CD4-positive, alpha-beta memory T cell (primary cell): ENCODE measurements at regions of chr6 and their contacts with region 1.

Region 1: DNA sequence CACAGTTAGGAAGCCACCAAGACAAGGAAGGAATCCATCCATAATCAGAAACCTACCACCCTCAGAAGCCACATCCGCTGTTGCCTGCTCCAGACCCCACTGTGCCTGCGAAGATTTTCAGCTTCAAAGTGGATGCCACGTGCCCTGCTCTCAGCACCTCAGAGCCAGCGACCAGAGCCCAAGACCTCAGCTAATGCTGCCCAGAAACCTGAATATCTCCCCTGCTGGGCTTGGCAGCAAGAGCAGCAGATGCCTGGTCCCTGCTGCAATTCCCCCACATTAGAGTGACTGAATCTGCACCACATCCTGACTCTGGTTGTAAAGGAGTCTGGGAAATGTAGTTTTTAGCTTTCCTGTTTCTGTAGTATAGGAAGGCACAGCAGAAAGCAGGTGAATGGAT is 10.7 kb upstream of the ULBP3 start:
- DNase-seq: peak; percentile 55 to 67 (median 58)
- H3K4me3 ChIP-seq: no peak overlapping the region
- H3K4me3 Mint-ChIP-seq: peak overlapping the region; percentile 14 to 81 (median 68)
- H3K27ac ChIP-seq: no peak overlapping the region
- H3K27ac Mint-ChIP-seq: peak overlapping the region in 6 of 7 donors; percentile 25 to 86 (median 69)
- H3K4me1 ChIP-seq: peaks cover 23% of the 10 kb centered on the region
- H3K4me1 Mint-ChIP-seq: peaks cover 14 to 26% (median 23%) of the 10 kb centered on the region in 4 donors
- H3K27me3 ChIP-seq: no peaks in the 10 kb centered on the region
- H3K27me3 Mint-ChIP-seq: peaks cover 10 to 22% of the 10 kb centered on the region in 2 donors

Region 2: DNA sequence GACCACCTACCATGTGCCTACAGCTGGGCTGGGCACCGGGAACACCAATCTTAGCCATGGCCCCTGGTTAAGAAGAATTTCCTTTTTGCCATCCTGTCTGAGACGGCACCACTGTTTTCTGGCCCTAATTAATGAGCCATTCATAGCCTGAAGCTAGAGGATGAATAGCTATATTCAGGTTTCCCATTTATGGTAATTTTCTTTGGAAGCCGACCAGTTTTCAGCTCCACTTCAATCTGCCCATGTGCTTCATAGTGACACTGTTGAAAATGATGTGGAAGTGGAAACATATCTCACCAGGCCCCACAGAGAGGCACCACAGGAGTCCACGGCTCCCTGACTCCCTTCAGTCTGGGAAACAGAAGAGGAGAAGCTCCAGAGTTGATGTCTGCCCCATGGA is 11.9 kb after region 1 on chr6:
- CTCF ChIA-PET with region 1: interaction called, 11 read pairs
- POLR2A ChIA-PET with region 1: no interaction called
- intact Hi-C with region 1: no loop called
- DNase-seq: no peak
- H3K4me3 ChIP-seq: no peak overlapping the region
- H3K4me3 Mint-ChIP-seq: no peak overlapping the region
- H3K27ac ChIP-seq: no peak overlapping the region
- H3K27ac Mint-ChIP-seq: no peak overlapping the region
- H3K4me1 ChIP-seq: no peaks in the 10 kb centered on the region
- H3K4me1 Mint-ChIP-seq: no peaks in the 10 kb centered on the region
- H3K27me3 ChIP-seq: no peaks in the 10 kb centered on the region
- H3K27me3 Mint-ChIP-seq: peaks cover 5 to 6% of the 10 kb centered on the region in 2 donors